CD4-positive, alpha-beta memory T cell (primary cell): ENCODE measurements at regions of chr3 and their contacts with region 1.

Region 1: DNA sequence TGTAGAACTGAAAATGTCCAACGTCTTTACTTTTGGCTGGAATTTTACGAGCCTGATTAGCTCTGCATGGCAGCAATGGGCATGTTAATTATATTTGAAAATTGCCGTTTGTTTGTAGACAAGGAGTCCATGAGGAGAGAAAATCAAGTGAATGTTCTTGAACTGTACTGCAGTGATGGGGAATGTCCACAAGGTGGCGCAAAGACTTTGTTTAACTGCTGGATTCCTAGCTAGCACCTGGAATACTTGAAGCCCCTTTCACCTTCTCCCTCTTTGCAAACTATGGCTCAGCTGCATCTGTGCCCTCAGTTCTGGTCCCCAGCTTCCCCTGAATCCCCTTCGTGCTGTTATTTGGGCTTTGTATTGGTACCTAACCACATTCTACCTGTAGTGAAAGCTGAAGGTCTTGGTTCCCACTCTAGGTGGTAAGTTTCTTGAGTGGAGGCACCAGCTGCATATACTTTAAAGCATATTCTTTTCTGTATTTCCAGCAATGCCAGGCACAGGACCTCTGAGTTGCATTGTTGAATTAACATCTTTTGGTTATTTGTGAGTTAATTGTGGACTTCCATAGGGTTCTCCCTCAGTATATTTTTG is 25.3 kb downstream of the EXOG start:
- DNase-seq: peak; percentile 54 to 63 (median 61)
- H3K4me3 ChIP-seq: no peak overlapping the region
- H3K4me3 Mint-ChIP-seq: peak overlapping the region in 3 of 8 donors; percentile 3 to 75 (median 41)
- H3K27ac ChIP-seq: no peak overlapping the region
- H3K27ac Mint-ChIP-seq: peak overlapping the region in 6 of 7 donors; percentile 43 to 87 (median 62)
- H3K4me1 ChIP-seq: peaks cover 31% of the 10 kb centered on the region
- H3K4me1 Mint-ChIP-seq: peaks cover 27 to 36% (median 33%) of the 10 kb centered on the region in 4 donors
- H3K27me3 ChIP-seq: no peaks in the 10 kb centered on the region
- H3K27me3 Mint-ChIP-seq: no peaks in the 10 kb centered on the region

Region 2: DNA sequence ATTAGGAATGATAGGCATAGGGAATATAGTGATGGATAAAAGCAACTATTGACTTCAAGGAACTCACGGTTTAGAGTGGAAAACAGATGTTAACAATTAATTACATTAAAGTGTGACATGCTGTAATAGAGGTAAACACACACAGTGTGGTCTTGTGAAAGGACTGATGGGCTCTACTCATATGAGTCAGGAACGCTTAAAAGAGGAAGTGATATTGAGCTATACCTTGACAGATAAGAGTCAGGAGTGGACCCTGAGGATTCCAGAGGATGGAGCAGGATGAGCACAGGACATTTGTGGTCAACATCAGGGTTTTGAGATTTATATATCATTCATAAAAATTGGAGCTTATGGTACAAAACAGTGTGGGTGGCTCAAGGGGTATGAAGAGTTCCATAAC is 14.4 kb before region 1 on chr3:
- CTCF ChIA-PET with region 1: interaction called, 45 read pairs
- POLR2A ChIA-PET with region 1: interaction called, 3 read pairs
- intact Hi-C with region 1: no loop called
- DNase-seq: no peak
- H3K4me3 ChIP-seq: no peak overlapping the region
- H3K4me3 Mint-ChIP-seq: no peak overlapping the region
- H3K27ac ChIP-seq: no peak overlapping the region
- H3K27ac Mint-ChIP-seq: peak overlapping the region in 3 of 7 donors; percentile 0 to 31 (median 14)
- H3K4me1 ChIP-seq: no peaks in the 10 kb centered on the region
- H3K4me1 Mint-ChIP-seq: no peaks in the 10 kb centered on the region
- H3K27me3 ChIP-seq: no peaks in the 10 kb centered on the region
- H3K27me3 Mint-ChIP-seq: no peaks in the 10 kb centered on the region

Region 3: DNA sequence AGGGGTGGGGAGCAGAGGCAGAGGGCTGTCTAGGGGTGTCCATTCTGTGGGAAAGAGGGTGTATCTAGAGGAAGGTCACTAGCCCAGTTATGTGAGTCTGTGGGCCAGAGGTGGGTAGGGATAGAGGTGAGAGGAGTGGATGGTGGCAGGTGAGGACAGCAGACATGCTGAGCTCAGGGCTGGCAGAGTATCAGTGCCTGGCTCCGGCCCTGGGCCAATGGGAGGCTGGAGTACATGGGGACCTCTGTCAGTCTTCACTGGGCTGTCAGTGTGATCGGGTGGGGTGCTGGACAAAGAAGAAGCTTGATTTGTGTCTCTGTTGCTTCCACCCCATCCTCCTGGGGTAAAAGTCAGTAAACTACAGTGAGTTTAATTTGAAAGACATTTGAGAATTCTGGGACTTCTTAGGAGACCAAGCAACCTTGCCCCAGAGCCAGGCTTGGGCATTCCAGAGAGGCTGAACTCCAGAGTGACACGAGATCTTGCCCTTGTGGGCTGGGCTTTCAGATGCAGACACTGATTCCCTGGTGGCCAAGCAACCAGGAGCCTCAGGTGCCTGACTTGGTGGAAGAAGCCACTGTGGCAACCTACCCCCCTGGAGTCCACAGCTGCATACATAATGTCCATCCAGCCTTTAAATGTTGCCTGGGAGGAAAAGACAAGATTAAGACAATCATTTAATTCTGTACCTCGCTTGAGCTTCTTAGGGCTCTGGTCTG is 35.3 kb after region 1 on chr3:
- CTCF ChIA-PET with region 1: interaction called, 16 read pairs
- POLR2A ChIA-PET with region 1: no interaction called
- intact Hi-C with region 1: no loop called
- DNase-seq: no peak
- H3K4me3 ChIP-seq: no peak overlapping the region
- H3K4me3 Mint-ChIP-seq: no peak overlapping the region
- H3K27ac ChIP-seq: no peak overlapping the region
- H3K27ac Mint-ChIP-seq: no peak overlapping the region
- H3K4me1 ChIP-seq: no peaks in the 10 kb centered on the region
- H3K4me1 Mint-ChIP-seq: no peaks in the 10 kb centered on the region
- H3K27me3 ChIP-seq: no peaks in the 10 kb centered on the region
- H3K27me3 Mint-ChIP-seq: peaks cover 2 to 5% of the 10 kb centered on the region in 2 donors

Region 4: DNA sequence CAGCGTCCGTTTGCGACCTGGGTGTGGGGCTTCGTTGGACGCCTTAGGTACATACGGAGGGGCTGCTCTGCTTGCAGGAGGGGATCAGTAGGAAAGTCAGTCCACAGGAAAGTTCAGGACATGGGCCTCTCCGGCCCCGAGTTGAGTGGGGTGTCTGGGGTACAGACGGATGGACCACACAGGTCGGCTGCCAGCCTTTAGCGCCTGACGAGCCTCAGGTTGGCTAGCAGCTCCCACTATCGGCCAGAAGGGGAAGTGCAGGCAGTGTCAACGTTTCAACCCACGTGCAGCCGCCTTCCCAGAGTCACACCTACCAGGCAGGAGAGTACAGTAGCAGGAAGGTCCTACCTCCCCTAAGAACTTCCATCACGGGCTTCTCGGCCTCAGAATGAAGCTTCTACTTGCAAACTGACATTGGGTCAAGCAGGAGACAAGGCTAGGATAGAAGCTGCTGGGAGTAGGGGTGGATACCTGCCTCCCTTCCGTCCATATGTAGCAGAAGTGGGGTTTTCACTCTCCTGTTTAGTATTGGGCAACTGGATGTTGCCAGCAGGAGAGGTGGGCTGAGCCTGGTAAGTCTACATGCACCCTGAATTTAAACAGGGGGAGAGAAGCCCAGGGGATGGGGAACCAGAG is 129.8 kb after region 1 on chr3:
- CTCF ChIA-PET with region 1: interaction called, 196 read pairs
- POLR2A ChIA-PET with region 1: interaction called, 6 read pairs
- intact Hi-C with region 1: loop called (anchors 1 kb)
- DNase-seq: peak in 4 of 5 donors; percentile 64 to 72 (median 70)
- H3K4me3 ChIP-seq: no peak overlapping the region
- H3K4me3 Mint-ChIP-seq: peak overlapping the region in 4 of 8 donors; percentile 7 to 73 (median 53)
- H3K27ac ChIP-seq: no peak overlapping the region
- H3K27ac Mint-ChIP-seq: peak overlapping the region in 2 of 7 donors; percentile 49 to 76
- H3K4me1 ChIP-seq: peaks cover 22% of the 10 kb centered on the region
- H3K4me1 Mint-ChIP-seq: peaks cover 6 to 10% (median 8%) of the 10 kb centered on the region in 4 donors
- H3K27me3 ChIP-seq: peaks cover 10% of the 10 kb centered on the region
- H3K27me3 Mint-ChIP-seq: peaks cover 8 to 26% of the 10 kb centered on the region in 2 donors